Psoas muscle (tissue), 8 donors: ENCODE measurements at regions of chr1 and their contacts with region 1.

Region 1: GRCh38 chr1:85307987-85308832 is 31.8 kb upstream of the BCL10 start:
- DNase-seq: peak; percentile 88 to 92
- ATAC-seq: peak; percentile 98 to 100 (median 98)
- H3K4me3 ChIP-seq: peak overlapping the region; percentile 45
- H3K27ac ChIP-seq: no peak overlapping the region
- H3K4me1 ChIP-seq: peaks cover 9% of the 10 kb centered on the region
- H3K27me3 ChIP-seq: no peaks in the 10 kb centered on the region
- CTCF ChIP-seq: peak; percentile 95

Region 2: DNA sequence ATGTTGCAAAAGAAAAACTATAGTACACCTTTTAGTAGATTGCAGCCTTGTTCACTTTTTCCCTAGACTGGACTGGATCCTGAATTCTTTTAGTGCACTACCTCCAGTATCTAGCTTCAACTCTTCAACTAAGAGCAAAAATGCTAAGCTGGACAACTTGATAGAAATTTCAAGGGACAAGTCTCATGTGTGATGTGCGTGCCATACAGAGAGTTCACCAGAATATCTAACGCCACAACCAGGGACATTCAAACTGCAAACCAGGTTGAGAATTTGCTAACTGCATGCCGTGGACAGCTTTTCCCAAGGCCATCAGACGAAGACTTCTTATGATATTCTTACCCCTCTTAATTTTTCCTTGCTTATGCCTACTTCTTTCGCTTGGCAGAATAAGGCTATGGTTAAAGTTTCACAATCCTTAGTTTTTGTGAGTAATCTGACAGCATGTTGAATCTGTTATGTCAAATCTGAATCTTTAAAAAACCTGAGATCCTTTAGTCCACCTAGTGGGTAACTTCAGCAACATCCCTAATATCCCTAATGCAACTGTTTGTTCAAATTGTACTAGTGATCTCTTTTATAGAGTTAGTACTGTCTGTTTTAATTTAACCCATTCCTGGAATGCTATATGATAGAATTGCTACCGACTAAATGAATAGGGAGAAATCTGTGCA is 90.3 kb after region 1 on chr1:
- intact Hi-C with region 1: loop called (anchors 2 kb)
- DNase-seq: no peak
- ATAC-seq: peak; percentile 57 to 86 (median 74)
- H3K4me3 ChIP-seq: no peak overlapping the region
- H3K27ac ChIP-seq: no peak overlapping the region
- H3K4me1 ChIP-seq: peaks cover 3% of the 10 kb centered on the region
- H3K27me3 ChIP-seq: no peaks in the 10 kb centered on the region
- CTCF ChIP-seq: peak; percentile 48

Region 3: DNA sequence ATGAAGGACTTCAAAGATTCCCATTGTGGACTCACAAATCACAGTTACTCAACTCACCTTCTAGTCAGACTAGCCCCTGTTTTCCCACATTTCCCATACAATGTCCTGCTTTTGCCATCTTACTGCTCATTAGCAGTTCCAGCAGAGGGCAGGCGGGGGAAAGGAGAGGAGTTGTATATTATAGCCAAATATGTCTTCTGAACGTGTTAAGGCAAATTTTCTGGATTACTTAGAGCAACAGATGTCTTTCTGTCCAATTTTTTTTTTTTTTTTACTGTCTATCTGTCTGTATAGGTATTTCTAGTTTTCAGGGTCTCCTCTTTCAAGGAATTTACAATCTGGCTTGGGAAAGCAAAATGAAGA is 186.7 kb after region 1 on chr1:
- intact Hi-C with region 1: loop called in 1 of 2 experiments (anchors 10 kb)
- DNase-seq: no peak
- ATAC-seq: peak; percentile 55 to 85 (median 66)
- H3K4me3 ChIP-seq: no peak overlapping the region
- H3K27ac ChIP-seq: peak overlapping the region; percentile 21
- H3K4me1 ChIP-seq: peaks cover 9% of the 10 kb centered on the region
- H3K27me3 ChIP-seq: no peaks in the 10 kb centered on the region
- CTCF ChIP-seq: peak; percentile 25

Region 4: GRCh38 chr1:85576642-85577418 is 268.6 kb after region 1 on chr1:
- intact Hi-C with region 1: loop called (anchors 2 to 5 kb)
- DNase-seq: peak; percentile 89 to 93
- ATAC-seq: peak; percentile 71 to 73 (median 72)
- H3K4me3 ChIP-seq: peak overlapping the region; percentile 76
- H3K27ac ChIP-seq: peak overlapping the region; percentile 96
- H3K4me1 ChIP-seq: peaks cover 7% of the 10 kb centered on the region
- H3K27me3 ChIP-seq: no peaks in the 10 kb centered on the region
- CTCF ChIP-seq: peak; percentile 76

Region 5: GRCh38 chr1:86018283-86018923 is 710.2 kb after region 1 on chr1:
- intact Hi-C with region 1: loop called in 1 of 2 experiments (anchors 10 kb)
- DNase-seq: no peak
- ATAC-seq: no peak
- H3K4me3 ChIP-seq: no peak overlapping the region
- H3K27ac ChIP-seq: no peak overlapping the region
- H3K4me1 ChIP-seq: no peaks in the 10 kb centered on the region
- H3K27me3 ChIP-seq: no peaks in the 10 kb centered on the region
- CTCF ChIP-seq: peak; percentile 62